ENCODE measurements at regions of chr3 and their contacts with region 1.

Region 1: GRCh38 chr3:159311400-159311799 is 509.5 kb downstream of the MFSD1 start:
- DNase-seq: no peak
- ATAC-seq: no peak
- H3K4me3 ChIP-seq: no peak overlapping the region
- H3K27ac ChIP-seq: no peak overlapping the region
- H3K4me1 ChIP-seq: no peaks in the 10 kb centered on the region
- H3K27me3 ChIP-seq: no peaks in the 10 kb centered on the region; the same call in 1 of the 2 replicates
- CTCF ChIP-seq: no peak
- POLR2A ChIP-seq: no peak
- RAD21 ChIP-seq: no peak

Region 2: GRCh38 chr3:158970006-158970405 is 341.4 kb before region 1 on chr3:
- CTCF ChIA-PET with region 1: no interaction called
- POLR2A ChIA-PET with region 1: no interaction called
- RAD21 ChIA-PET with region 1: no interaction called
- intact Hi-C with region 1: no loop called
- DNase-seq: no peak
- ATAC-seq: no peak
- H3K4me3 ChIP-seq: no peak overlapping the region
- H3K27ac ChIP-seq: no peak overlapping the region
- H3K4me1 ChIP-seq: no peaks in the 10 kb centered on the region
- H3K27me3 ChIP-seq: no peaks in the 10 kb centered on the region
- CTCF ChIP-seq: no peak
- POLR2A ChIP-seq: no peak
- RAD21 ChIP-seq: no peak

Region 3: GRCh38 chr3:159158213-159158612 is 153.2 kb before region 1 on chr3:
- CTCF ChIA-PET with region 1: no interaction called
- POLR2A ChIA-PET with region 1: no interaction called
- RAD21 ChIA-PET with region 1: no interaction called
- intact Hi-C with region 1: no loop called
- DNase-seq: peak; percentile 79
- ATAC-seq: peak; percentile 93
- H3K4me3 ChIP-seq: no peak overlapping the region
- H3K27ac ChIP-seq: no peak overlapping the region
- H3K4me1 ChIP-seq: peaks cover 4 to 16% of the 10 kb centered on the region in 2 experiments; a peak in 3 of 4 replicates
- H3K27me3 ChIP-seq: no peaks in the 10 kb centered on the region
- CTCF ChIP-seq: peak; percentile 31 to 51 (median 47); a peak in 4 of 6 replicates
- POLR2A ChIP-seq: no peak
- RAD21 ChIP-seq: peak; percentile 61

Region 4: GRCh38 chr3:159322322-159322939 is 11.0 kb after region 1 on chr3:
- CTCF ChIA-PET with region 1: interaction called, 20 read pairs
- POLR2A ChIA-PET with region 1: no interaction called
- RAD21 ChIA-PET with region 1: no interaction called
- intact Hi-C with region 1: no loop called
- DNase-seq: peak; percentile 41
- ATAC-seq: peak; percentile 99
- H3K4me3 ChIP-seq: no peak overlapping the region
- H3K27ac ChIP-seq: no peak overlapping the region
- H3K4me1 ChIP-seq: no peaks in the 10 kb centered on the region; a peak in 1 of 4 replicates
- H3K27me3 ChIP-seq: no peaks in the 10 kb centered on the region
- CTCF ChIP-seq: peak; percentile 65 to 98 (median 97); a peak in 5 of 6 replicates
- POLR2A ChIP-seq: no peak
- RAD21 ChIP-seq: peak; percentile 68

Region 5: DNA sequence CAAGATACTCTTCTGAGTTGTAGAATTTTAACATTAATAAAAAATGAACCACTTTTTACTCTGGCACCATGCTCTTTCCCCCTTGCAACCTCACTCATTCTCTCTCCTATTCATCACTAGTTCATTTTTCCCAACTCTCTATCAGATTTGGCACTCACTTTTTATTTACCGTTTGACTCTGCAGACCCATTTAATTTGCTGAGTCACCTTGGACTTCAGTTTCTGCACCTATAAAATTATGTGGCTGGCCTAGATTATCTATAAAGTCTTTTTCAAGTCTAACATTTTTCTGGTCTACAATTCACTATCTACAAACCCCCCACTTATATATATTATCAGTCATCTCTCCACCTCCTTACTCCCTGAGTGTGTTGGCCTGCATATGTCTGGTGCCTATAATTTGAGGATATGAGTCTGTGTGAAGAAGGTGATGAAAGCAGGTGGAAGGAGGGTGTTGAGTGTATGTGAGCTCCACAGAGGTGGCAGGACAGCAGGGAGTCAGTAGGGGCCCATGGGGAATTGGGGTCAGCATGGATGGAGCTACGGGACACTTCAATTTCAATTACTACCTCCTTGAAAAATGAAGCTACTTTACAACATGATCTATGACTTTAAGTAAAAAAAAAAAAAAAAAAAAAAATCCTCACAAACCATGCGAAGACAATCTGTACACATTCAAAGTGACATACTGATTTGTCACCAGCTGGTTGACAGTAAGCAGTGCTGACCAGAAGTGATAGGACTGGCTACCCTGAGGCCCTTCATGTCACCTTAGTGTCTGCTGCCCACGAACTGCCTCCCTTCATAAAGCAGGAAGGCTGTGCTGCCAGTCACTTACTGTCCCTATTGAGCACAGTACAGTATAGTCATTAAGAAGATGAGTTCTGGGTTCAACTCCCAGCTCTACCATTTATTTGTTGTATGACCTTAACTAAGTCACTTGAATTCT is 343.1 kb after region 1 on chr3:
- CTCF ChIA-PET with region 1: no interaction called
- POLR2A ChIA-PET with region 1: no interaction called
- RAD21 ChIA-PET with region 1: no interaction called
- intact Hi-C with region 1: no loop called
- DNase-seq: no peak
- ATAC-seq: no peak
- H3K4me3 ChIP-seq: no peak overlapping the region
- H3K27ac ChIP-seq: no peak overlapping the region
- H3K4me1 ChIP-seq: no peaks in the 10 kb centered on the region
- H3K27me3 ChIP-seq: no peaks in the 10 kb centered on the region
- CTCF ChIP-seq: no peak
- POLR2A ChIP-seq: no peak
- RAD21 ChIP-seq: no peak